ENCODE measurements at regions of chr3 and their contacts with region 1.

Region 1: GRCh38 chr3:53718472-53718871 is 127.7 kb downstream of the CHDH start:
- DNase-seq: no peak
- ATAC-seq: no peak
- H3K4me3 ChIP-seq: no peak overlapping the region
- H3K27ac ChIP-seq: no peak overlapping the region
- H3K4me1 ChIP-seq: no peaks in the 10 kb centered on the region
- H3K27me3 ChIP-seq: no peaks in the 10 kb centered on the region
- CTCF ChIP-seq: no peak

Region 2: DNA sequence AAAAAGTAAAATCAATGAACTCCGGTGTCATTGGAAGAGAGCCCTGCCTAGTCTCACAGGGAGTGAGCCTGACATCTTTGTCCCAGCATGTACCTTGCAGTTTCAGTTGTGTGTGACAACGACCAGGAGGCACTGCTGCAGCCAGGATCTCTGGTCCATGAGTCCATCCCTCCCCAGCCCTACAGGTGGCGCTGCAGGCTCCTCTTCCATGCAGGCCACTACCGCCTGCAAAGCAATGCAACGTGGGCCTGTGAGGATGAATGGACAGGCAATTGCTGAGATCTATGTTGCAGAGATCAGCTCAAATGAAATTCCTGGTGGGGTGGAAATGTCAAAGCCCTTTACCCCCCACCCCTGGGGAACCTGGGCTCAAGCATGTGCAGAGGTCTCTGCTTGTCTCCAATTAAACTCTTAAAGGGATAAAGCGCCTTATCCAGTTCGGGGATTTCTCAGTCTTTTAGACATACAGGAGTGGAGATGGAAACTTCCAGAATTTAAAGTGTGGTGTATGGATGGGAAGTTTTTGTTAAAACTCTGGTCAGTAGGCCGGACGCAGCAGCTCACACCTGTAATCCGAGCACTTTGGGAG is 498.5 kb before region 1 on chr3:
- intact Hi-C with region 1: loop called in 1 of 2 experiments (anchors 2 kb)
- DNase-seq: peak; percentile 81 to 86
- ATAC-seq: peak; percentile 79 to 89 (median 87)
- H3K4me3 ChIP-seq: no peak overlapping the region
- H3K27ac ChIP-seq: no peak overlapping the region
- H3K4me1 ChIP-seq: no peaks in the 10 kb centered on the region
- H3K27me3 ChIP-seq: no peaks in the 10 kb centered on the region
- CTCF ChIP-seq: peak; percentile 82

Region 3: DNA sequence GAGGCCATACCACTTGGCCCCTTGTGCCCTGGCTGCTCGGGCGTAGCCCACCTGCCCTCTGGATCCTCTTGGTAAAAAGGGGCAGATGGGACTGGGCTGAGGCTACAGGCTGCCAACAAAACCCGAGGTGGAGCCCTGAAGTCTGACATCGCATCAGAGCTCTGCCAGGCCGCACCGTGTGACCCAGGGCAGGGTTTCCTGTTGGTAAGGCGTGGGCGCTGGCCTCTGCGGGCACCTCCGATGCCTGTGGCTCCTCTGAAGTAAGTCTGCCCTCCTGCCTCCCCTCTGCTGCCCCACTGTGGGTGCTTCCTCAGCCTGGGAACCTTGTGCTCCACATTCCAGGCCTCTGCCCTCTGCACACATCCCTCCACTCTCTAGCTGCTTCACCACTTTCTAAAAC is 118.9 kb after region 1 on chr3:
- intact Hi-C with region 1: no loop called
- DNase-seq: no peak
- ATAC-seq: no peak
- H3K4me3 ChIP-seq: no peak overlapping the region
- H3K27ac ChIP-seq: no peak overlapping the region
- H3K4me1 ChIP-seq: no peaks in the 10 kb centered on the region
- H3K27me3 ChIP-seq: no peaks in the 10 kb centered on the region
- CTCF ChIP-seq: no peak

Measured in psoas muscle (tissue), 8 donors.